AG04450 (cell line): ENCODE measurements at regions of chr1 and their contacts with region 1.

Region 1: GRCh38 chr1:23344111-23344986 is at the start of gene HNRNPR:
- DNase-seq: peak; percentile 100
- H3K4me3 ChIP-seq: peak within 1 kb of the TSS; percentile 83
- H3K27ac ChIP-seq: peak within 1 kb of the TSS; percentile 86
- H3K27me3 ChIP-seq: no peaks in the 10 kb centered on the region
- CTCF ChIP-seq: no peak
- polyA plus RNA-seq, gene HNRNPR: 134 and 171 TPM in 2 replicates

Region 2: GRCh38 chr1:23357138-23357908 is 13.0 kb after region 1 on chr1:
- CTCF ChIA-PET with region 1: no interaction called
- POLR2A ChIA-PET with region 1: interaction called, 16 read pairs
- DNase-seq: no peak
- H3K4me3 ChIP-seq: no peak overlapping the region
- H3K27ac ChIP-seq: no peak overlapping the region
- H3K27me3 ChIP-seq: no peaks in the 10 kb centered on the region
- CTCF ChIP-seq: no peak

Region 3: GRCh38 chr1:23376890-23377811 is 32.8 kb after region 1 on chr1:
- CTCF ChIA-PET with region 1: no interaction called
- POLR2A ChIA-PET with region 1: interaction called, 12 read pairs
- DNase-seq: no peak
- H3K4me3 ChIP-seq: no peak overlapping the region
- H3K27ac ChIP-seq: peak overlapping the region; percentile 90
- H3K27me3 ChIP-seq: no peaks in the 10 kb centered on the region
- CTCF ChIP-seq: no peak

Region 4: GRCh38 chr1:23403735-23404486 is 59.6 kb after region 1 on chr1:
- CTCF ChIA-PET with region 1: interaction called, 8 read pairs
- POLR2A ChIA-PET with region 1: interaction called, 24 read pairs
- DNase-seq: peak; percentile 65
- H3K4me3 ChIP-seq: no peak overlapping the region
- H3K27ac ChIP-seq: peak overlapping the region; percentile 78
- H3K27me3 ChIP-seq: no peaks in the 10 kb centered on the region
- CTCF ChIP-seq: peak; percentile 96

Region 5: GRCh38 chr1:23484253-23485001 is 140.1 kb after region 1 on chr1:
- CTCF ChIA-PET with region 1: no interaction called
- POLR2A ChIA-PET with region 1: interaction called, 11 read pairs
- DNase-seq: peak; percentile 74
- H3K4me3 ChIP-seq: peak overlapping the region; percentile 81
- H3K27ac ChIP-seq: peak overlapping the region; percentile 70
- H3K27me3 ChIP-seq: no peaks in the 10 kb centered on the region
- CTCF ChIP-seq: no peak